Esophagus muscularis mucosa (tissue), 4 donors: ENCODE measurements at regions of chr3 and their contacts with region 1.

Region 1: GRCh38 chr3:12934431-12934830 is 93.1 kb upstream of the RPL32 start:
- DNase-seq: no peak
- H3K4me3 ChIP-seq: no peak overlapping the region
- H3K27ac ChIP-seq: peak overlapping the region; percentile 73 to 79 (median 78)
- H3K4me1 ChIP-seq: peaks cover 75 to 92% (median 80%) of the 10 kb centered on the region in 4 donors
- H3K27me3 ChIP-seq: no peaks in the 10 kb centered on the region
- CTCF ChIP-seq: no peak
- EP300 ChIP-seq: no peak
- POLR2A ChIP-seq: no peak

Region 2: DNA sequence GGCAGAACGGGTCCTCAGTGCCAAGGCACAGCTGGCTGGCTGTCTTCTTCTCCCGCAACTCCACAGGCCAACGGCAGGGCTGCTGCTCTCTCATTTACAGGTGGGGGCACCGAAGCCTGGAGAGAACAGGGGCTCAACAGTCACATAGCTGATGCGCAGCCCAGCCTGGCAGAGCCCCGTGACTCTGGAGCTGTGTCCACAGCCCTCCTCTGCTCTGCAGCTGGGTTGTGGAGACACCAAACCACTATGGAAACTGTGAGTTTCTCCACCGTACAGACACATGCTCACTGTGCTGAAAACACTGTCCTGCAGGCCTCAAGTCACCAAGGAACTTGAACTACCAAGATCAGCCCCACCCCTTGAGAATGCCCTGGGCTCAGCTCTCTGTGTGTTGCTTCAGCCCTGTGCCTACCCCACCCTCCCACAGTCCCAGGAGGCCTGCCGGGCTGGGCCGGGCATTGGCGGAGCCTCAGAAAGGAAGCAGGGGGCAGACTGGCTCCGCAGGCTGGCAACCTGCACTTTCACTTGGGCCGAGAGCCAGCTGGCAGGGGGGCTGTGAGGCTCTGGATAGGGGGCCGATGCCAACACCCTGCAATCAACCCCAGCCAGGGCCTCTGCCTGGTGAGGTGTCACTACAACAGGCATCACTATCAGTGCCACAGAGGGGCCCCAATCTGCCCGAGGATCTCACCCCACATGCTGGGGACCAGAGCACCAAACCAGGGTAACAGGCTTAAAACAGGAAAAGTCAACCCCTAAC is 20.6 kb after region 1 on chr3:
- intact Hi-C with region 1: loop called (anchors 1 kb)
- DNase-seq: peak; percentile 93
- H3K4me3 ChIP-seq: peak overlapping the region in 1 of 4 donors; percentile 10
- H3K27ac ChIP-seq: peak overlapping the region; percentile 76 to 81 (median 79)
- H3K4me1 ChIP-seq: peaks cover 80 to 95% (median 86%) of the 10 kb centered on the region in 4 donors
- H3K27me3 ChIP-seq: no peaks in the 10 kb centered on the region
- CTCF ChIP-seq: peak; percentile 24 to 41 (median 35)
- EP300 ChIP-seq: no peak
- POLR2A ChIP-seq: no peak

Region 3: DNA sequence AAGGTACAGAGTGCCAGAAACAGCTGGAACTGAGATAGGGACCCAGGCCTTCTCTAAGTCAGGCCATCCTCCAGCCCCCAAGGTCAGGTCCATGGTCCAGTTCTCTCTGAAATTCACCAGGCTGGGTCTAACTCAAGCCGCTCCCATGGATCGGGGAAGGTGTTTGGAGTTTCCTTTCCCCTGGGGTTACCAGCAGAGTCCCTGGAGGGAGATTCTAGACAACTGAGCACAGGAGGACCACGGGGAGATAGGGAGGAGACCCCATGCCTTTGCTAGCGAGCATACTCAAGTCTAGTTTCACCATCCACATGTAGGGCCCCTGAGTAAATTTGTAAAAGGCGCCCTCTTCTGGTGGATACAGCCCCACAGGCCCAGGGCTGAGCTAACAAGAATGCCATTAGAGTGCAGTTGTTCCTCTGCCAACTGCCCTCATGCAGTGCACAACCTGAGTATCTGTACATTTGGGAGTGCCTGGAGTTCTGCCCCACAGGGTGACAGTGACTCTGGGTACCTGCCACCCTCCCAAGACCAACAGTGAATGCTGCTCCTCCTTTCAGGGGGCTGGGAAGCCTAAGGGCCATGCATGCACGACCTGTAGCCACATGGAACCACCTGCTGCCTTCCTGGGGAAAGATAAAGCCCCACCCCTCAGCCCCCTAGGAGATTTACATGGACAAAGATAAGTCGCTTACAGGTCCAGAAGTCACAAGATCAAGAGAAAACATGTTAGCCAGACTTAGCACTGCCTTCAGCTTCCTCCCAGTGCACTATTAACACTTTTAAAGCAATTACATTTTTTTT is 49.8 kb after region 1 on chr3:
- intact Hi-C with region 1: loop called (anchors 5 kb)
- DNase-seq: peak; percentile 94
- H3K4me3 ChIP-seq: no peak overlapping the region
- H3K27ac ChIP-seq: no peak overlapping the region
- H3K4me1 ChIP-seq: peaks cover 7 to 20% (median 13%) of the 10 kb centered on the region in 4 donors
- H3K27me3 ChIP-seq: no peaks in the 10 kb centered on the region
- CTCF ChIP-seq: peak; percentile 74 to 89 (median 77)
- EP300 ChIP-seq: no peak
- POLR2A ChIP-seq: no peak

Region 4: GRCh38 chr3:13040361-13041074 is 106.1 kb after region 1 on chr3:
- intact Hi-C with region 1: no loop called
- DNase-seq: no peak
- H3K4me3 ChIP-seq: no peak overlapping the region
- H3K27ac ChIP-seq: no peak overlapping the region
- H3K4me1 ChIP-seq: peaks cover 0 to 10% (median 4%) of the 10 kb centered on the region in 4 donors
- H3K27me3 ChIP-seq: no peaks in the 10 kb centered on the region
- CTCF ChIP-seq: no peak
- EP300 ChIP-seq: no peak
- POLR2A ChIP-seq: no peak

Region 5: DNA sequence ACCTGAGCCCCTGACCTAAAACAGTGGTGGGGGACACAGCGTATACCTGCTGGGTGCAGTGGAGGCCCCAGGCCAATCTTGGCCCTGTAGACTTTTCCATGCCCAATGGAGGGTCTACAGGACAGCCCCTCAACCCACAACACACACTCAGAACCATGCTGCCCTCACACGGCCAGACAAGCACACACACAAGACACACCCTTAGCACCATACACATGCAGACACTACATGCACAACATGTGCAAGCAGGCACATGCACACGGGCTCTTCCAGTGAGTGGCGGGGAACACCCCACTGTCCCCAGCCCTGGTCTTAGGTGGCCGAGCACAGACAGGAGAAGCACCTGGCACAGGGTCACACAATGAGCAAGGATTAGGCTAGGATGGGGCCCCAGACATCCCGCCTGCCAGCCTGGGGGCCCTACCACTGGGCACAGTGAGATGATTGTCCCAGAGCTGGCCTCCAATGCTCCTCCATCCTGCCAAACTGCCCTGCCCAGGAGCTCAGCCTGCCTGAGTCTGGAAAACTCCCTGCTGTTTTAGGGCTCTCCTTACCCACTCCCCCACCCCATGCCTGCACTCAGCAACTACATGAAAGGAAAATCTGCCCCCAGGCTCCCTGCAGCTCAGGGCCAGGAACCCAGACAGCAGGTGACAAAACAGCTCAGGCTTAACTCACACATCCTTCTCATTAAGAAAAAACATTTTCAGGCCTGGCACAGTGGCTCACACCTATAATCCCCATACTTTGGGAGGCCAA is 123.0 kb after region 1 on chr3:
- intact Hi-C with region 1: no loop called
- DNase-seq: no peak
- H3K4me3 ChIP-seq: no peak overlapping the region
- H3K27ac ChIP-seq: no peak overlapping the region
- H3K4me1 ChIP-seq: no peaks in the 10 kb centered on the region
- H3K27me3 ChIP-seq: no peaks in the 10 kb centered on the region
- CTCF ChIP-seq: no peak
- EP300 ChIP-seq: no peak
- POLR2A ChIP-seq: no peak